ENCODE measurements at regions of chr20 and their contacts with region 1.

Region 1: GRCh38 chr20:59207742-59208357 is 44.2 kb downstream of the ZNF831 start:
- DNase-seq: peak; percentile 23
- H3K4me3 ChIP-seq: no peak overlapping the region
- H3K27ac ChIP-seq: no peak overlapping the region
- H3K4me1 ChIP-seq: no peaks in the 10 kb centered on the region
- H3K27me3 ChIP-seq: no peaks in the 10 kb centered on the region
- CTCF ChIP-seq: peak; percentile 43 to 76

Region 2: DNA sequence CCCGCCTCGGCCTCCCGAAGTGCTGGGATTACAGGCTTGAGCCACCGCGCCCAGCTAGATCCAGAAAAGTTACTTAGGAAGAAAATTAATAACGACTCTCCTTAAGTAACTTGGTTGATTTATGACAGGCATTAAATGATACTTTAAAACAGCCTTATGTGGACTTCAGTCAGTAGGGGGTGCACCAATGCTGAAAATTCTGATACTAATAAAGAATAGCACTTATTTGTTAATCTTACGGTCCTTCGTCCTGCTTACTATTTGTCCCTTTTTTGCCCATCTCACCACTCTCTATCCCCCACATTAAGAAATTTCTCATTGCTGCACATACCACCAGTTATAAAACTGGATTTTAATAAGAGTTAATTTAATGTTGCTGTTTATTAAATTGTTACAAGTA is 152.6 kb before region 1 on chr20:
- CTCF ChIA-PET with region 1: no interaction called
- dilution Hi-C with region 1: no loop called
- in situ Hi-C with region 1: no loop called
- intact Hi-C with region 1: loop called (anchors 1 kb)
- DNase-seq: no peak
- H3K4me3 ChIP-seq: no peak overlapping the region
- H3K27ac ChIP-seq: no peak overlapping the region
- H3K4me1 ChIP-seq: no peaks in the 10 kb centered on the region
- H3K27me3 ChIP-seq: no peaks in the 10 kb centered on the region
- CTCF ChIP-seq: peak; percentile 43 to 58

Region 3: GRCh38 chr20:59102841-59103299 is 105.0 kb before region 1 on chr20:
- CTCF ChIA-PET with region 1: no interaction called
- dilution Hi-C with region 1: loop called (anchors 5 kb)
- in situ Hi-C with region 1: loop called in 1 of 2 experiments (anchors 25 kb)
- intact Hi-C with region 1: no loop called
- DNase-seq: no peak
- H3K4me3 ChIP-seq: no peak overlapping the region
- H3K27ac ChIP-seq: no peak overlapping the region
- H3K4me1 ChIP-seq: no peaks in the 10 kb centered on the region
- H3K27me3 ChIP-seq: peaks cover 6% of the 10 kb centered on the region
- CTCF ChIP-seq: no peak

Region 4: DNA sequence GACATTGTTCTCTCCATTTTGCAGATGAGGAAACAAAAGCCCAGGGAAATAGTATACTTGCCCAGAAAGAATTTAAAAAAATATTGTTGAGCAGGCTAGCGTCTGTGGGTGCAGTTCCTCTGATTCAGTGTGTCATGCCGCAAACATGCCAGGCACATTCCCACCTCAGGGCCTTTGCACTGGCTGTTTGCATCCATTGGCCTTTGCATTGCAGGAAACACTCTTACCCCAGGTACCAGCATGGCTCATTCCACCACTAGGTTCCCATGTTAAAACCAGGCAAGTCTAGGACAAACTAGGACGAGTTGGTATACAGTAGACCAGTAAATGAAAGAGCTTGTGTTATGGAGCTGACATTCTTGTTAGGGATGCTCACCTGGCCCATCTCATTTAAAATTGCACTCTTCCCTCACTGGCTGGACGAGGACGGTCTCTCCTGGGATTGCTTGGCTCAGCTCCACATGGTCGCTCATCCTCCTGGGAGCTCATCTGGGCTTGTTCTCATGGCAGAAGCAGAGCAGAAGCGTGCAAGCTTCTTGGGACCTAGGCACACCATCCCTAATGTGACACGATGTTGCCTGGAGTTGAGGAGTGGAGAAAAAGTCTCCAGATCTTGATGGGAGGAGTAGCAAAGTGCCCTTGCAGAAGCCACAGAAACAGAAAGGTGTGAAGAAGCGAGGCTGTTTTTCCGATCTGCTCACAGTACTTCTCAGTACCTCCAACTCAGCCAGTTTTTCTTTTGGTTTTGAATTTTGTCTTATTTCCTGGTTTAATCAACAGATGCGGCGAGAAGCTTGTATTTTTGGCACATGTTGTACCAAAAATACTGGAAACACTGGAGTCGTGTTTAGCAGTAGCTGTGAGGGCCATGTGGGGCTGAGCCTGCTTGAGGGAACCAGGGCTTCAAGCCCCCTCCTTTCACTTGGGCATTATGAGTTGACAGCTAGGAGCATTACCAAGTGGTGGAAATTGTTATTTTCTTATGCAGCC is 30.3 kb before region 1 on chr20:
- CTCF ChIA-PET with region 1: no interaction called
- dilution Hi-C with region 1: no loop called
- in situ Hi-C with region 1: no loop called
- intact Hi-C with region 1: no loop called
- DNase-seq: no peak
- H3K4me3 ChIP-seq: no peak overlapping the region
- H3K27ac ChIP-seq: no peak overlapping the region
- H3K4me1 ChIP-seq: no peaks in the 10 kb centered on the region
- H3K27me3 ChIP-seq: peaks cover 5% of the 10 kb centered on the region
- CTCF ChIP-seq: no peak

Measured in mammary epithelial cell (primary cell).